ENCODE measurements at regions of chr17 and their contacts with region 1.

Region 1: DNA sequence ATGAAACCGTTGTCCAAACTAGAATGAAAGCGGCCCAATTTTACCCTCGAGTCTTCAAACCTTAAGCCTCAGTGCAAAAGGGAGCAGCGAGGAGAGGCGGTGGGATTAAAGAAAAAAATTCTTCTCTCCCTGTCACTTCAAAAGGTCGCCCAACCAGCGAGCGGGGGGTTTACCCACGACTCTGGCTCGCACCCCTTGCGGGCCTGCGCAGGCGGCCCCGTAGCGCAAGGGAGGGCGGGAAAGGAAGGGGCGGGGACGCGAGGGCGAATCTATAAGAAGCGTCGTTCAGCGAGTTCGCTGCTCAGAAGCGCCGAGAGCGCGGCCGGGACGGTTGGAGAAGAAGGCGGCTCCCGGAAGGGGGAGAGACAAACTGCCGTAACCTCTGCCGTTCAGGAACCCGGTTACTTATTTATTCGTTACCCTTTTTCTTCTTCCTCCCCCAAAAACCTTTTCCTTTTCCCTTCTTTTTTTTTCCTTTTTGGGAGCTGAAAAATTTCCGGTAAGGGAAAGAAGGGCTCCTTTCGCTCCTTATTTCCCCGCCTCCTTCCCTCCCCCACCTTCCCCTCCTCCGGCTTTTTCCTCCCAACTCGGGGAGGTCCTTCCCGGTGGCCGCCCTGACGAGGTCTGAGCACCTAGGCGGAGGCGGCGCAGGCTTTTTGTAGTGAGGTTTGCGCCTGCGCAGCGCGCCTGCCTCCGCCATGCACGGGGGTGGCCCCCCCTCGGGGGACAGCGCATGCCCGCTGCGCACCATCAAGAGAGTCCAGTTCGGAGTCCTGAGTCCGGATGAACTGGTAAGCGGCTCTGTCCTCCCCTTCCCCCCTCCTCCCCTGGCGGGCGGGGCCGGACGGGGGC is at the start of gene POLR2A:
- DNase-seq: peak; percentile 99
- ATAC-seq: peak; percentile 87
- total RNA-seq, gene POLR2A: 36.4 TPM

Region 2: DNA sequence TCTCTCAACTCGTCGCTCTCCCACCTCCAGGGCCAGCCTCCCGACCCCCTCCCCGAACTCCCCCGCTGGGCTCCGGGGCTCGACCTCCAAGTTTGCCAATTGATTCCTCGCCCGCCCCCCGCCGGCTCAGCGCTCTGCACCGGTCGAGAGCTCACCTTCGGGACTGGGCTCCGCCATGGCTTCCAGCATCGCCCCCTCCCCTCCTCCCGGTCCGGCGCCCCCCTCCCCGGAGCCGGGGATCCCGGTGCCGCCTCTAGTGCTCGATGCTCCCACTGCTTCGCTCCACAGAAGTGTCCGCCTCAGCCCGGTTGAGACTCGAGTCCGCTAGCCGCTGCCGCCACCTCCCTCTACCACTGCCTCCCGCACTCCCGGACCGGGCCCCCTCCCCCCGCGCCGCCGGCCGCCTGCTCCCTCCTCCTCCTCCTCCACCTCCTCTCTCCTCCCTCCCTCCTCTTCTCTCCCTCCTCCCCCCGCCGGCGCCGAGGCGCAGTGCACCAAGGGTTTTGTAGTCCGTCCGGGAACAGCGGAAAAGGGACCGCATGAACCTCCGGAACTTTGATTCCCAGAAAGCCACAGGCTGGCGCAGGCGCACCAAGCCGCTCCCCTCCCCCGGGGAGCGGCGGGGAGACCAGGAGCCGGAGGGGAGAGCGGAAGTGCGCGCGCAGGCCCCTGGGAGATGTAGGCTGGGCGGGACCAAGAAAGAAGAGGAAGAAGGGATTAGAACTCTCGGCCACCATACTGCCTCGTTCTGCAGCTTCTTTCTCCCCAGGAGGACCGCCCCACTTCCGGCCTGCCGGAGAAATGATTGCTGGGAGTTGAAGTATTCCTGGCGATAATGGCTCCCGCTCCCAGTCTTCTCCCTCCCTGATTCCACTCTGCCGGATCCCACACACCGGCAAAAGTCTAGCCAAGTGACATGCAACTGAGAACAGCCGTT is 244.9 kb before region 1 on chr17 and contains the start of gene PHF23:
- intact Hi-C with region 1: no loop called
- DNase-seq: peak; percentile 100
- ATAC-seq: peak; percentile 85
- total RNA-seq, gene PHF23: 23.3 TPM

Region 3: GRCh38 chr17:7403977-7404736 is 80.1 kb before region 1 on chr17 and contains the start of gene TMEM256:
- intact Hi-C with region 1: loop called (anchors 2 kb)
- DNase-seq: peak; percentile 99
- ATAC-seq: peak; percentile 94
- total RNA-seq, gene TMEM256: 64.0 TPM

Region 4: DNA sequence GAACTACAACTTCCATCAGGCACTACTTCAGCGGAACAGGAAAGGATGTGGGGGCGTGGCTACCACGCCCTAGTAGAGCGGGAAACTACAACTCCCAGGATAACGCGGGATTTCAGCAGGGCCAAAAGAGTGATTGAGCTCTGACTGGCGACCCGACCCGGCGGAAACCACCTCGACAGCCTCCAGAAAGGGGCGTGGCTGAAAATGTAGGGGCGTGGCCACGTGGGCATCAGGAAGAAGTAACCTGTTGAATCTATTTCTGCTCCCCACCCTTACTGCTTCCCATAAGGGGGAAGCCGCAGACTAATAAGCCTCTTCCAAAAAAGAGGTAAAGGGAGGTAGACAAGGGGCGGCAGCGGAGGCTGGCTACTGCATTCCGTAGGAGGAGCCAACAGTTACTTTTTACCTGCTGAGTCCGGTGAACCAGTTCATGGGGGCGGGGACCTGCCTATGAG is 49.0 kb before region 1 on chr17 and contains the start of gene TMEM102:
- intact Hi-C with region 1: loop called (anchors 2 kb)
- DNase-seq: peak; percentile 95
- ATAC-seq: peak; percentile 86
- total RNA-seq, gene TMEM102: 2.7 TPM

Region 5: GRCh38 chr17:7548585-7549400 is 64.5 kb after region 1 on chr17 and contains the start of gene TNFSF12:
- intact Hi-C with region 1: loop called (anchors 5 kb)
- DNase-seq: peak; percentile 89
- ATAC-seq: peak; percentile 84
- total RNA-seq, gene TNFSF12: 41.7 TPM

Region 6: GRCh38 chr17:7561028-7561575 is 76.8 kb after region 1 on chr17:
- intact Hi-C with region 1: loop called (anchors 2 kb)
- DNase-seq: peak; percentile 94
- ATAC-seq: peak; percentile 72

Region 7: GRCh38 chr17:7844292-7845154 is 360.2 kb after region 1 on chr17:
- intact Hi-C with region 1: loop called (anchors 10 kb)
- DNase-seq: peak; percentile 96
- ATAC-seq: peak; percentile 82

Region 8: DNA sequence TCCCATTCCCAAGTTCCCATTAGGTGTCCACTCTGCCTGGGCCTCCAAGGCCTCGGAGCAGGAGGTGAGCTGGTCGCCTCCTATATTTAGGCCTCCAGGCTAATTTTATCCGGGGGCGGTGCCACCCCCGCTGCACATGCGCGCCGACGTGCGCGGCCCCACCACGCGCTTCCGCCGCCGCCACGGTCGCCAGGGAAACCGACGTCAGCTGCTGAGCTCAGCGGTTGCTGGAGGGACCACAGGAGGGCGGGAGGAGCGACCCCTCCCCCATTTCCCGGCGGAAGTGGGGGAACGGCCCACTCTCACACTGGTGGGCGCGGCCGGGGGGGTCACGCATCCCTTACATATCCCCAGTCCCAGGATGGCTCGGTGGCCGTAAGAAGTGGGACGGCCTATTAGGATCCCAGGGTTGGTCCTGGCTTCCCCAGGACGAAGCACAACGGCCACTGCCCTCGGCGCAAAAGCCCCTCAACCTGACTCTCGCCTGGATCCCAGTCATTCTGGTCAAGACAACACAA is 666.9 kb after region 1 on chr17:
- intact Hi-C with region 1: loop called (anchors 5 kb)
- DNase-seq: peak; percentile 95
- ATAC-seq: peak; percentile 40